Posterior cingulate gyrus (tissue), 11 donors: ENCODE measurements at regions of chr4 and their contacts with region 1.

Region 1: DNA sequence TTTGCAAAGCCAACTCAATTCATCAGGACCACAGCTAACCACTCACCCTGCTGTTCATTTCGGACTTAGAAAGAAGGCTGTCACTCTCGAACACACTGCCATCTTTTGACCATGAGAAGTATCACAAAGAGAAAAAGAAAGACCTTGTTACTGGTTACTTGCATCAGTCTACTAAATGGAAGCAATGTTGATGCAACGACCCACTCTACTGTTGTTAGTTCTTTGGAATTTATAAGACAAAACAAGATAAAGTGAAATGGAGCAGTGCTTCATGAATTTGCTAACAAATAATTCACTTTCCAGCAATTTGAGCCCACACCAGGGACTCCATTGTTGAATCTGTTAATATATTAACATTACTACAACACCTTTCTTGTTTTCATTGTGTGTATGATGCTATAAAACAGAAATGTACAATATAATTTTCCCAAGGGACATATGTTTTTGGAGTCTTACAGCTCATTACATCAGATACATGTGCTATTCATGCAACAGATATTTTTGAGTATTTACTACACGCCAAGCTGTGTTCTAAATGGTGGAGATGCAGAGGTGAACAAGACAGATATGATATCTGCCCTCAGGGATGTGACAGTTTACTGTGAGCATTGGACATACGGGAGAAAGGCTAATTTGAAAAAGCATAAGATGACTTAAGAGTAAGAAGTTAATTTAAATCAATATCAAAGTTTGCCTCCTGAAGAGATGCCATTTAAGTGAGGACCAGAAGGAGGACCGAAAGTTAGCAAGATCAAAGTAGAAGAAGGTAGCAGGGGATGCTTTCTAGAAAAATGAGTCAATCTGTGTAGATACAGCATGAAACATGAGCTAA is 87.2 kb downstream of the AREG start:
- DNase-seq: no peak

Region 2: GRCh38 chr4:74376888-74377483 is 155.2 kb before region 1 on chr4:
- intact Hi-C with region 1: loop called (anchors 1 kb)
- DNase-seq: no peak

Region 3: DNA sequence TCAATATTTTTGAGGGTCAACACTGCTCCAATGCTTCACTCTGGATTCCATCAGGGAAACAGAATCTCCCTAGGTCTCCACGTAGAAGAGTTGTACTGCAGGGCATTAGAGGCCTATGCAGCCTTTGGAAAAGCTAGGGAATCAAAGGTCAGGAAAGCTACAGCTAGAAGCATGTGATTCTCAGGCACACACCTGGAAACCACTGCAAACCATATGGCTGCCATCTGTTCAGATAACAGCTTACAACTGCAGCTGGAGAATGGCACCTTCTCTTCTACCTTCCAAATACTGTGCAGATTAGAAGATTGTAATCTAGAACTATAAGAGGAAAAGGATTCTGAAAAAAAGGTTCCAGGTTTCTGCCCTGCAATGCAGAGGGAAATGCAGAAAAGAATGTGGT is 201.6 kb after region 1 on chr4:
- intact Hi-C with region 1: no loop called
- DNase-seq: no peak

Region 4: GRCh38 chr4:74751856-74752255 is 219.7 kb after region 1 on chr4:
- intact Hi-C with region 1: no loop called
- DNase-seq: no peak